Dendritic cell treated with granulocyte-macrophage colony-stimulating factor and Interleukin-4, amounts not matched to agents 40 ng/mL and 50 ng/mL, for 4 days (primary cell): ENCODE measurements at regions of chr10 and their contacts with region 1.

Region 1: GRCh38 chr10:44974628-44975431 is 3.8 kb downstream of the DEPP1 start:
- H3K4me3 Mint-ChIP-seq: peak overlapping the region; percentile 46
- H3K27ac Mint-ChIP-seq: peak overlapping the region; percentile 88
- H3K4me1 Mint-ChIP-seq: peaks cover 91% of the 10 kb centered on the region
- H3K27me3 Mint-ChIP-seq: no peaks in the 10 kb centered on the region

Region 2: GRCh38 chr10:44932517-44933450 is 42.0 kb before region 1 on chr10:
- intact Hi-C with region 1: loop called (anchors 1 kb)
- H3K4me3 Mint-ChIP-seq: no peak overlapping the region
- H3K27ac Mint-ChIP-seq: no peak overlapping the region
- H3K4me1 Mint-ChIP-seq: peaks cover 58% of the 10 kb centered on the region
- H3K27me3 Mint-ChIP-seq: peaks cover 7% of the 10 kb centered on the region

Region 3: DNA sequence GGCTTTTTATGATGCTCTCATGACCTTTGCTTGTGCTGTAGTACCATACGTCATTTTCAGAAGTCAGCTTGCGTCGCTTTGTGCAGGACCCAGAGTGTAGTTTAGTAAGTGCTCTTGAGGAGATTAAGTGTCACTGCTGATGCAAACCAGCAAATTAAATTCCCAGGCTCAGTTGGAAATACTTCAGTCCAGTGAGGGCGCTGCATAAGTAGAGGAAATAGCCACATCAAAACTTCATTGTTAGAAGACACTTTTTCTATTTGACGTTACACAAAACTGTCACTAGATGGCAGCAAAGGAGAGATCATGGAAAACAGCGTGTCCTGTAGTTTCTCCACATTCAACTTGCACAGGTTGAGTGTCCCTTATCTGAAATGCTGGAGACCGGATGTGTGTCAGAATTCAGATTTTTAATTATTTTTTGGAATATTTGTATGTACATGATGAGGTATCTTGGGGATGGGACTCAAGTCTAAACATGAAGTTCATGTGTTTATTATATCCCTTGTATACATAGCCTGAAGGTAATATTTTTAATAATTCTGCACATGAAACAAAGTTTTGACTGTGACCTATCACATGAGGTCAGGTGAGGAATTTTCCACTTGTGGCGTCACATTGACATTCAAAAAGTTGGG is 33.8 kb after region 1 on chr10:
- intact Hi-C with region 1: no loop called
- H3K4me3 Mint-ChIP-seq: no peak overlapping the region
- H3K27ac Mint-ChIP-seq: no peak overlapping the region
- H3K4me1 Mint-ChIP-seq: peaks cover 14% of the 10 kb centered on the region
- H3K27me3 Mint-ChIP-seq: no peaks in the 10 kb centered on the region

Region 4: DNA sequence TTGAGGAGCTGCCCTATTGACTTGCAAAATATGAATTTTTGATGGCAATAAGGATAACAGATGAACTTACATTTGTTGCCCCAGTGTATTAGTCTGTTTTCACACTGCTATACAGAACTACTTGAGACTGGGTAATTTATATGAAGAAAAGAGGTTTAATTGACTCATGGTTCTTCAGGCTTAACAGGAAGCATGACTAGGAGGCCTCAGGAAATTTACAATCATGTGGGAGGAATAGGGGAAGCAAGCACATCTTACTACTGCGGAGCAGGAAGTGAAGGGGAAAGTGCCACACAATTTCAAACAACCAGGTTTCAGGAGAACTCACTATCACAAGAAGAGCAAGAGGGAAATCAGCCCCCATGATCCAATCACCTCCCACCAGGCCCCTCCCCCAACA is 83.8 kb after region 1 on chr10:
- intact Hi-C with region 1: no loop called
- H3K4me3 Mint-ChIP-seq: no peak overlapping the region
- H3K27ac Mint-ChIP-seq: no peak overlapping the region
- H3K4me1 Mint-ChIP-seq: peaks cover 19% of the 10 kb centered on the region
- H3K27me3 Mint-ChIP-seq: no peaks in the 10 kb centered on the region